Lower leg skin (tissue), 4 donors: ENCODE measurements at regions of chr3 and their contacts with region 1.

Region 1: DNA sequence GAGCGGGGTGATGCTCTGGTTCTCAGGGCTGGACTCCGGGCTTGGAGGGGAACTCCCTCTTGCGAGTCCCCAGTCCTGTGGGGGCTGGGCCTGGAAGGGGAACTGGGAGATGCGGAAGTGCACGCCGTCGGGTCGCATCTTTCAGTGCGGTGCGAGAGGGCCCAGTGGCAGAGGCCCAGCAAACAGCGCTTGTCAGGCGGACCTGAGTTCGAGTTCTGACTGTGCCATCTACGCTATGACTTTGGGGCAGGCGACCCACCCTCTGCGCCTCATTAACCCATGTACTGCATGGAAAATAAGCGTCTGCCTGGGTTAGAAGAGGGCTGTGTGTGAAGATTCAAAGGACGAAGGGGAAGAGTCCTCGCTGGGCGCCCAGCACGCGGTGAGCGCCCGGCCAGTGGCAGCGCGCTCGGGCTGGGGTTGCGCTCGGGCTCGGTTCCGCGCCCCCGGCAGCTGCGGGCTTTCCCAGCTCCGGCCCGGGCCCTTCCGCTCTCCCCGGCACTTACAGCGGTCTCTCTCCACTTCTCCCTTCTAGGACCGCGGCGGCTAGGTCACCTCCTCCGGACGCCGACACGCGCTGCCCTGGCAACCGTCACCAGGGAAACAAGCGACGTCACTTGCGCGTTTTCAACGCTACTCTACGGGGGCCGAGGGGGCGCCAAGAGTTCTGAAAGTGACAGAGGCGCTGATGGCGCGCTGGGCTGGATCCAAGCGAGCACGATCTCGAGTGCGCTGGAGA is at the start of gene CCDC13:
- DNase-seq: peak; percentile 91 to 99
- H3K4me3 ChIP-seq: peak within 1 kb of the TSS; percentile 11
- CTCF ChIP-seq: no peak
- POLR2A ChIP-seq: no peak
- total RNA-seq, gene CCDC13: 0.06 TPM in 1 of 4 donors, not detected in the others

Region 2: GRCh38 chr3:42728056-42728455 is 44.8 kb before region 1 on chr3:
- intact Hi-C with region 1: no loop called
- DNase-seq: peak; percentile 14 to 82
- H3K4me3 ChIP-seq: no peak overlapping the region
- CTCF ChIP-seq: no peak
- POLR2A ChIP-seq: no peak

Region 3: GRCh38 chr3:42839616-42840015 is 66.8 kb after region 1 on chr3:
- intact Hi-C with region 1: loop called (anchors 10 kb)
- DNase-seq: no peak
- H3K4me3 ChIP-seq: no peak overlapping the region
- CTCF ChIP-seq: peak in 1 of 3 donors; percentile 47
- POLR2A ChIP-seq: no peak